ENCODE measurements at regions of chr9 and their contacts with region 1.

Region 1: GRCh38 chr9:137390543-137391410 is 32.2 kb downstream of the EXD3 start:
- DNase-seq: no peak
- ATAC-seq: peak in 3 of 4 donors; percentile 8 to 19 (median 14)
- H3K4me3 ChIP-seq: peak overlapping the region in 7 of 12 donors; percentile 5 to 30 (median 15)
- H3K27ac ChIP-seq: peak overlapping the region; percentile 64 to 92 (median 84)
- H3K4me1 ChIP-seq: peaks cover 8 to 32% (median 18%) of the 10 kb centered on the region in 12 donors
- H3K27me3 ChIP-seq: no peaks in the 10 kb centered on the region
- CTCF ChIP-seq: no peak
- POLR2A ChIP-seq: no peak

Region 2: GRCh38 chr9:137316012-137316976 is 74.5 kb before region 1 on chr9:
- intact Hi-C with region 1: loop called in 1 of 10 experiments (anchors 5 kb)
- DNase-seq: peak; percentile 56 to 83 (median 81)
- ATAC-seq: peak in 2 of 4 donors; percentile 31 to 52
- H3K4me3 ChIP-seq: peak overlapping the region; percentile 20 to 53 (median 46)
- H3K27ac ChIP-seq: peak overlapping the region; percentile 25 to 97 (median 75)
- H3K4me1 ChIP-seq: peaks cover 3 to 78% (median 42%) of the 10 kb centered on the region in 12 donors
- H3K27me3 ChIP-seq: peaks cover 0 to 21% (median 6%) of the 10 kb centered on the region in 9 donors
- CTCF ChIP-seq: no peak
- POLR2A ChIP-seq: no peak

Region 3: DNA sequence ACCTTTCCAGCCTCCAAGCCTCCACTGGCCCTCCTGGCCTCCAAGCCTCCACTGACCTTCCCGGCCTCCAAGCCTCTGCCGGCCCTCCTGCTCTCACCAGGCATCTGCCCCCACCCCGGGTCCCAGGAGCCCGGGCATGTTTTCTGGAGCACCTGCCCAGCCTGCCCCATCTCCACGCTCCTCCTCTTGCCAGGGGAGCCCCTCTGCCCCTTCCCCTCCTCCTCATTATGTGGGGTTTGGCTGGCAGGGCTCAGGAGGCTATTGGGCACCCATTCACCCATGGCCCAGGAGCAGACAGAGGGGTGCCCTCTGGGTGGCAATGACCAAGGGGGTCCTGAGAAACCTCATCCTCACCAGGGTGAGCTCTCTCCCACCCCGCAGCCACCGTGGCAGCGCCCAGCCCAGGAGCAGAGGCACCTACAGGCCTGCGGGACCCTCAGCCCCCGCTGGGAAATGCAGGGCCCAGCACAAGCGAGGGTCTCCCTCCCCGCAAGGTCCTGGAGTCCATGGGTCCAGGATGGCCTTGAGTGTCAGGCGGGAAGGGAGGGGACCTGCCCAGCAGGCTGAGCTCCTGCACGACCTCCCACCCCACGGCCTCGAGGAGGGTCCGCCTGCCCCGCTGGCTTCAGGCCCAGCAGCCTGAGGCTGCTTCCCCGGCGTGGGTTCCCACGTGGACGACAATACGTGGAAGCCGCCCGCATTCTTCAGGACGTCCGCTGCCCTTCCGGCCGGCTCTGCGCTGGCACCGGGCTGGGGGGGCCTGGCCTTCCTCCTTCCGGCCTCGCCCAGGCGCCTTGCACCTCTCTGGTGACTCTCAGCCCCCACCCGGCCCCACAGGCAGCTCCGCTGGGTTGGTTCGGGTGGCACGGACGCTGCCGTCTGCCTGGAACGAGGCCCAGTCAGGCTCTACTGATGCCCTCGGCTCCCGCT is 37.3 kb before region 1 on chr9:
- intact Hi-C with region 1: loop called in 3 of 10 experiments (anchors 1 to 5 kb)
- DNase-seq: peak; percentile 61 to 81 (median 72)
- ATAC-seq: peak; percentile 38 to 83 (median 73)
- H3K4me3 ChIP-seq: no peak overlapping the region
- H3K27ac ChIP-seq: peak overlapping the region; percentile 44 to 86 (median 73)
- H3K4me1 ChIP-seq: peaks cover 0 to 27% (median 13%) of the 10 kb centered on the region in 12 donors
- H3K27me3 ChIP-seq: no peaks in the 10 kb centered on the region
- CTCF ChIP-seq: no peak
- POLR2A ChIP-seq: no peak